Right ventricle myocardium inferior (tissue), 1 donor: ENCODE measurements at regions of chr17 and their contacts with region 1.

Region 1: DNA sequence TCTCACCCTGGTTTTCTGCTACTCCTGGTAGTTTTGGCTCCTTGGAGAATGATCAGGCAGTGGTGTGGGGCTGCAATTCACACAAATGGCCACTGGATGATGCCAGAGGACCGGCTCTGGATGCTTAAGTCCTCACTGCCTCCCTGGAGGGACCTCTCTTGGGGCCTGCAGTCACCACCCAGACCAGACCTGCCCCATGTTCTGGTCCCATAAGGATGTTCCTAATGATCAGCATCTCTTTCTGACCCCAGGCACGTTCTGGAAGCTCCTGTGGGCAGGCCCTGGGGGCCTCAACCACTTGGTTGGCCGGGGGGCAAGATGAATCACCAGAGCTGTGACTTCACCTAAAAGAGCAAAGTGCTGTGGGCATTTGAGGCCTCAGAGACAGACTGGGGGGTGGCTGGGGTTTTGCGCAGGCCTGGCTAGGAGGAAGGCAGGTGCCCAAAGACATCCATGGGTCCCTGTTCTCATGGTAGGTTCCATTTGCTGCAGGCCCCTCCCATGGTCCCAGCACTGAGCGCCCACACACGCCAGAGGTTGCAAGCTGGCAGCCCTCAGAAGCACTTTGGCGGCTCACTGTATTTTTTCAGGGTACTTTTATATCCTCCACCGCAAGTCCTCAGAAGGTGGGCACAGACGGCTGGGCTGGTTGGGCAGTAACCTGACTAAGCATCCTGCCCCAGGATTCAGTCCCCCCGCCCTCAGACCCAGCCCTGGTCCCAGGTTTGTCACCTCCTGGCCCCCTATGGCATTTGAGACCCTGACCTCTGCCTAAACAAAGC is 53.2 kb downstream of the NT5M start:
- DNase-seq: no peak
- ATAC-seq: peak; percentile 89

Region 2: GRCh38 chr17:17322516-17323510 is 33.5 kb before region 1 on chr17:
- intact Hi-C with region 1: no loop called
- DNase-seq: no peak
- ATAC-seq: no peak

Region 3: DNA sequence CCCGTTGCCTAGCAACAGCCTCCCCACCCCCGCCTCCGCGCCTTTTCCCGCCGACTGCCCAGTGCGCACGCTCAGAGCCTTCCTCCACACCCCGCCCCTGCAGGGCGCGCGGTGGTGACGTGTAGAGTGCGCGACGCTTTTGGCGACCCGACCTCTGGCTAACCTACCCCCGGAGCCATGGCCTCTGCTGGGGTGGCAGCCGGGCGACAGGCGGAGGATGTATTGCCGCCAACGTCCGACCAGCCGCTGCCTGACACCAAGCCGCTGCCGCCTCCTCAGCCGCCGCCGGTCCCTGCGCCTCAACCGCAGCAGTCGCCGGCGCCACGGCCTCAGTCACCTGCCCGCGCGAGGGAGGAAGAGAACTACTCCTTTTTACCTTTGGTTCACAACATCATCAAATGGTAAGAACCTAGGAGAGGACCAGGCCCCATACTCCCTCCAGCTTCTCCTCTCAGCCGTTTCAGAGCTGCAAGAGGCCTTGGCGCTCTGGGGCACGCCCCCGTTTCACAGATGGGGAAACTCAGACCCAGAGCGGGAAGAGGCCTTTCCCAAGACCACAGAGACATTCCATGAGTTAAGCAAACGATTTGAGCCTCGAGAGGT is 120.6 kb after region 1 on chr17 and contains the start of gene MED9:
- intact Hi-C with region 1: loop called (anchors 5 kb)
- DNase-seq: peak; percentile 97
- ATAC-seq: peak; percentile 98
- total RNA-seq, gene MED9: 40.4 TPM

Region 4: GRCh38 chr17:17613708-17614114 is 257.4 kb after region 1 on chr17:
- intact Hi-C with region 1: loop called (anchors 1 kb)
- DNase-seq: no peak
- ATAC-seq: peak; percentile 89

Region 5: DNA sequence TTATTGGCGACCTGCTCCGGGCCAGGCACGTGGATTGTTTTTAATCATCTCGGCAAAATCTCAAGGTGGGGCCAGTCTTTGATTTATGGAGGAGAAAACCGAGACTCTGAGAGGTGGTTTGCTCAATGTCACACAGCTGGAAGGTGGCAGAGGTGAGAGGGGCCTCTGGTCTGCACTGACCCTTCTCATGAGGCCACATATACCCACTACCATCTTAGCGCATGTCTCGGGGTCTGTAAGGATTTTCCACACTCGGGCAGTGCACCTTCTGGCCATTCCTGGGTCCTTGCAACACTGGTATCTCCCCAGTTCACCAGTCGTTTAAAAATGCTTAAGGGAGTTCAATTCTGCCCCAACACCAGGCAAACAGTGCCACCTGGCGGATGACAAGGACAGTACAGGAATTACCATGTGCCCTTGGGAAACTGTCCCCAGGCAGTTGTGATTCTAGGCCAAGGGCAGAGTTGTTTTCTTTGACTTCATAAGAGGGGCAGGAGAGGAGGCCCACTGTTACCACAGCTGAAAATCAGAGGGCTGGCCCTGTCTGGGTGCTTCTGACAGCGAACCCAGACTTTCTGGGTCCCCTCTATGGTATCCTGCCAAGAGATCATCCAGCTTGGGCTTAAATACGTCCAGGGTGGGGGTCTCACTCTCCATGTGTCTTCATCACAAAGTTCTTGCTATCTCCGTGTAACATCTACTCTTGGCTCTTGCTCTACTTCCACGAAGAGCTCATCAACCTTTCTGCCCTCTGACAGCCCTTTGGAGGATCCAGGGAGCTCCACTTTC is 285.5 kb after region 1 on chr17:
- intact Hi-C with region 1: loop called (anchors 1 kb)
- DNase-seq: peak; percentile 88
- ATAC-seq: peak; percentile 90